K562 (cell line): ENCODE measurements at regions of chr4 and their contacts with region 1.

Region 1: GRCh38 chr4:143482840-143483239 is 30.7 kb upstream of the SMARCA5 start:
- DNase-seq: peak in 2 of 4 experiments; percentile 33 to 56
- ATAC-seq: peak; percentile 83
- H3K4me3 ChIP-seq: no peak overlapping the region
- H3K27ac ChIP-seq: no peak overlapping the region
- H3K4me1 ChIP-seq: no peaks in the 10 kb centered on the region; a peak in 1 of 5 replicates
- H3K27me3 ChIP-seq: no peaks in the 10 kb centered on the region
- CTCF ChIP-seq: peak; percentile 39 to 77 (median 58); a peak in 5 of 6 replicates
- EP300 ChIP-seq: no peak
- POLR2A ChIP-seq: no peak
- RAD21 ChIP-seq: peak; percentile 86 to 88

Region 2: DNA sequence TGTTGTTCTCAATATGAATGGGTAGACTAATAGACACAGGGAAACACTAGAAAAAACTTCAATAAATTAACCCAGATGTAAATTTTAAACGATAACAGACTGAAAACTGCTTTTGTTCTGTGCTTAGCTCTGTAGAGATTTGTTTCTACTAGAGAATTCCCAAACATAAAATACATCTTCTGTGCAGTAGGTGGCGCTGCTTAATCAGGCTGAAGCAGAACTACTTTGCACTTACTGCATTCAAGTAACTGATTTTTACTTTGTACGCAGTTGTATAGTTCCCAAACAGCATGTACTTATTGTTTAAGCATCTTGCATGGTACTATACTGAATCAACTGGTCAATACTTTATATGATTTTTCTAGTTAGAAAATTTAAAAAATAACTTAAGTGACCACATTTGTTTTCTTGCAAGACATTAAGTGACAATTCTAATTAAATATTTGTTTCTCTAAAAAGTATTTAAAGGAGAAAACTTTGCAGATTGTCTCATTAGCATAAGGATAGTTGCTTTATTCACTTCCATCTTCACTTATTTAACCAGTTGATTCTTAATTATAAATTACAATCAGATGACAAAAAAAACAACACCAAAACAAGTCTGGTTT is 1355.8 kb before region 1 on chr4:
- CTCF ChIA-PET with region 1: no interaction called
- POLR2A ChIA-PET with region 1: no interaction called
- in situ Hi-C with region 1: no loop called
- intact Hi-C with region 1: loop called (anchors 1 kb)
- DNase-seq: peak; percentile 13 to 56 (median 32)
- ATAC-seq: peak; percentile 72
- H3K4me3 ChIP-seq: no peak overlapping the region
- H3K27ac ChIP-seq: no peak overlapping the region
- H3K4me1 ChIP-seq: no peaks in the 10 kb centered on the region
- H3K27me3 ChIP-seq: no peaks in the 10 kb centered on the region
- CTCF ChIP-seq: peak; percentile 49 to 65 (median 59); a peak in 5 of 6 replicates
- EP300 ChIP-seq: no peak
- POLR2A ChIP-seq: no peak
- RAD21 ChIP-seq: peak; percentile 59 to 69

Region 3: GRCh38 chr4:142846729-142847596 is 635.9 kb before region 1 on chr4:
- CTCF ChIA-PET with region 1: no interaction called
- POLR2A ChIA-PET with region 1: no interaction called
- in situ Hi-C with region 1: loop called (anchors 25 kb)
- intact Hi-C with region 1: no loop called
- DNase-seq: peak in 1 of 4 experiments; percentile 6
- ATAC-seq: peak; percentile 77
- H3K4me3 ChIP-seq: no peak overlapping the region
- H3K27ac ChIP-seq: no peak overlapping the region
- H3K4me1 ChIP-seq: peaks cover 0 to 6% of the 10 kb centered on the region in 2 experiments; a peak in 1 of 5 replicates
- H3K27me3 ChIP-seq: no peaks in the 10 kb centered on the region
- CTCF ChIP-seq: peak in 2 of 3 experiments; percentile 14 to 18; a peak in 2 of 6 replicates
- EP300 ChIP-seq: no peak
- POLR2A ChIP-seq: no peak
- RAD21 ChIP-seq: no peak

Region 4: DNA sequence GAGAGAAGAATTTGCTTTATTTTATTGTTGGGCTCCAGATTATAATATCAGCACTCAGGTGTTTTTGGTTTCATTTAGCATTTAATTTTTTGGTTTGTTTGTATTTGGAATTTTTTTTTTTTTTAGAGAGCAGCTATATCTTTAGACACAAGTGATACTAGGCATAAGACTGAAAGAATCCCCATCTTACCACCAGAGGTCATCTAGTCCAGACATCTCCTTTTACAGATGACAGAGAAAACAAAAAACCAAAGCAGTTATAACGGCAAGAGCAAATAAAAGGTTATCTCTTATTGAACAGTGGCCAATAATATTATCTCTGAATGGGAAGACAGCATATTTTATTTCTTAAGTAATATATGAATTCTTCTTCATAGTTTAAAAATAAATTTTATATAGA is 275.3 kb before region 1 on chr4:
- CTCF ChIA-PET with region 1: interaction called, 10 read pairs
- POLR2A ChIA-PET with region 1: no interaction called
- in situ Hi-C with region 1: no loop called
- intact Hi-C with region 1: loop called (anchors 2 kb)
- DNase-seq: peak in 1 of 4 experiments; percentile 15
- ATAC-seq: peak; percentile 61; the same call in 2 of the 3 replicates
- H3K4me3 ChIP-seq: no peak overlapping the region
- H3K27ac ChIP-seq: no peak overlapping the region
- H3K4me1 ChIP-seq: no peaks in the 10 kb centered on the region
- H3K27me3 ChIP-seq: no peaks in the 10 kb centered on the region
- CTCF ChIP-seq: peak in 1 of 3 experiments; percentile 38; a peak in 2 of 6 replicates
- EP300 ChIP-seq: no peak
- POLR2A ChIP-seq: no peak
- RAD21 ChIP-seq: no peak

Region 5: GRCh38 chr4:143399113-143399949 is 83.5 kb before region 1 on chr4:
- CTCF ChIA-PET with region 1: no interaction called
- POLR2A ChIA-PET with region 1: no interaction called
- in situ Hi-C with region 1: no loop called
- intact Hi-C with region 1: loop called (anchors 5 kb)
- DNase-seq: peak; percentile 26 to 61 (median 32)
- ATAC-seq: peak; percentile 82
- H3K4me3 ChIP-seq: no peak overlapping the region
- H3K27ac ChIP-seq: no peak overlapping the region
- H3K4me1 ChIP-seq: peaks cover 0 to 3% of the 10 kb centered on the region in 2 experiments; a peak in 2 of 5 replicates
- H3K27me3 ChIP-seq: no peaks in the 10 kb centered on the region
- CTCF ChIP-seq: peak; percentile 64 to 70 (median 65)
- EP300 ChIP-seq: no peak
- POLR2A ChIP-seq: no peak
- RAD21 ChIP-seq: peak; percentile 46 to 56

Region 6: GRCh38 chr4:143431526-143432257 is 51.1 kb before region 1 on chr4:
- CTCF ChIA-PET with region 1: no interaction called
- POLR2A ChIA-PET with region 1: no interaction called
- in situ Hi-C with region 1: no loop called
- intact Hi-C with region 1: no loop called
- DNase-seq: no peak
- ATAC-seq: no peak
- H3K4me3 ChIP-seq: no peak overlapping the region
- H3K27ac ChIP-seq: no peak overlapping the region
- H3K4me1 ChIP-seq: no peaks in the 10 kb centered on the region
- H3K27me3 ChIP-seq: no peaks in the 10 kb centered on the region
- CTCF ChIP-seq: no peak
- EP300 ChIP-seq: no peak
- POLR2A ChIP-seq: no peak
- RAD21 ChIP-seq: no peak